MCF 10A (cell line): ENCODE measurements at regions of chr9 and their contacts with region 1.

Region 1: DNA sequence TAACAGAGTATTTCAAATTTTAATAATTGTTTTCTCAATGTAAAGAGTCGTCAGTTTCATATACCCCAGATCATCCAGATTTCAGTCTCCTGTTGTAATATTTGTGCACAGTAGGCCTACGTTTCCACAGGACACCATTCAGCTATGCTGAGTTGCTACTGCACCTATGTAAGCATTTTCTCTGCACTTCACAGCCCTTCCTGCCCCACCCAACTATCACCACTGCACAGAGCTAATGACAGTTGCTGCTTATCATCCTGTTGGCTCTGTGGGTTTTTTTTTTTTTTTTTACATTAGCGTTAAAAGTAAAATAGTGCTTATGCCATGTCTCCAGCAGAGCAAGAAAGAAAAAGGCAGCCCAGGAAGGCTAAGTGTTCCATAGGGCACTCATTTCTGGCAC is 5.9 kb upstream of the PRKACG start:
- DNase-seq: no peak
- H3K4me3 Mint-ChIP-seq: no peak overlapping the region
- H3K27ac Mint-ChIP-seq: no peak overlapping the region
- H3K4me1 Mint-ChIP-seq: peaks cover 6% of the 10 kb centered on the region
- H3K27me3 Mint-ChIP-seq: peaks cover 52% of the 10 kb centered on the region
- CTCF ChIP-seq: no peak

Region 2: DNA sequence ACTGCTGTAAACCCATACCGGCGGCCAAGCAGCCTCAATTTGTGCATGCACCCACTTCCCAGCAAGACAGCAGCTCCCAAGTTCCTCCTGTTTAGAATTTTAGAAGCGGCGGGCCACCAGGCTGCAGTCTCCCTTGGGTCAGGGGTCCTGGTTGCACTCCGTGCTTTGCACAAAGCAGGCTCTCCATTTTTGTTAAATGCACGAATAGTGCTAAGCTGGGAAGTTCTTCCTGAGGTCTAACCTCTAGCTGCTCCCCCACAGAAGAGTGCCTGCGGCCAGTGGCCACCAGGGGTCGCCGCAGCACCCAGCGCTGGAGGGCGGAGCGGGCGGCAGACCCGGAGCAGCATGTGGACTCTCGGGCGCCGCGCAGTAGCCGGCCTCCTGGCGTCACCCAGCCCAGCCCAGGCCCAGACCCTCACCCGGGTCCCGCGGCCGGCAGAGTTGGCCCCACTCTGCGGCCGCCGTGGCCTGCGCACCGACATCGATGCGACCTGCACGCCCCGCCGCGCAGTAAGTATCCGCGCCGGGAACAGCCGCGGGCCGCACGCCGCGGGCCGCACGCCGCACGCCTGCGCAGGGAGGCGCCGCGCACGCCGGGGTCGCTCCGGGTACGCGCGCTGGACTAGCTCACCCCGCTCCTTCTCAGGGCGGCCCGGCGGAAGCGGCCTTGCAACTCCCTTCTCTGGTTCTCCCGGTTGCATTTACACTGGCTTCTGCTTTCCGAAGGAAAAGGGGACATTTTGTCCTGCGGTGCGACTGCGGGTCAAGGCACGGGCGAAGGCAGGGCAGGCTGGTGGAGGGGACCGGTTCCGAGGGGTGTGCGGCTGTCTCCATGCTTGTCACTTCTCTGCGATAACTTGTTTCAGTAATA is 15.9 kb after region 1 on chr9 and contains the start of gene FXN:
- CTCF ChIA-PET with region 1: interaction called, 32 read pairs
- POLR2A ChIA-PET with region 1: no interaction called
- intact Hi-C with region 1: no loop called
- DNase-seq: peak; percentile 78
- H3K4me3 Mint-ChIP-seq: peak within 1 kb of the TSS; percentile 94
- H3K27ac Mint-ChIP-seq: peak within 1 kb of the TSS; percentile 92
- H3K4me1 Mint-ChIP-seq: peaks cover 6% of the 10 kb centered on the region
- H3K27me3 Mint-ChIP-seq: no peaks in the 10 kb centered on the region
- CTCF ChIP-seq: peak; percentile 91
- total RNA-seq, gene FXN: 18.4 and 31.6 TPM in 2 replicates